ENCODE measurements at regions of chr19 and their contacts with region 1.

Region 1: DNA sequence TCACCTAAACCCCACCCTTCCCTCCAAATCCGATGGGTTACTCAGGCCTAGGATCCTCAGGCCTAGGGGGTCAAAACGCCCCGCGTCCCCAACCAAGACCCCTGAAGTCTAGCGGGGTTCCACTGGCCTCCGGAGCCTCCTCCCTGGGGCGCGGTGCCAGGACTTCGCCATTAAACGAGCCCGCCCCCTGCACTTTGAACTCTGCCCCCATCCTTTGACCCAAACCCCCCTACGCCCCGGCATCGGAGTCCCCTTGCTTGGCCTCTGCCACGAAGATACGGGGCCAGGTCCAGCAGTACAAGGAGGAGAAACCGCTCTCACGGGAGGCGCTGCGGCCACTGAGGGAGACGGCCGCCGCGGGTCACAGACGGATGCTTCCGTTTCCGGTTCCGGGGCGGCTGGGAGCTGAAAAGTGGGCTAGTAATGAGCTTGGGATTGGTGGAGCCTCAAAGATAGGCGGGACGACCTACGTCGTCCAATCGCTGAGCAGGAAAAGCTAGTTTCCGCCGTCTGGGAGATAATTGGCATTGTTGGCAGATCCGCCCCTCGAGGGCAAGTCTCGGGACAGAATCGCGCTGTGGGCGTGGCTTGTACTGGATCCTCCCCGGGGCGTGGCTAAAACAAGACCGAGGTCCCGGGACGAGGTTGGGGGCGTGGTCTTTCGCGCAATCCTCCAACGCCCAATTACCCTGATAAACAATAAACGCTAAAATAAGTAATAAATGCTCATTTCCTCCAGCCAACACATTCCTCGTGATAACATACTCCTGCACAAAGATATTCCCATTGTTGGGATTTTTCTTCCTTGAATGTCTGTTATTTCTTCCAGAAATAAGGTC is 5.7 kb upstream of the ZNF77 start:
- DNase-seq: peak; percentile 100
- H3K4me3 Mint-ChIP-seq: peak overlapping the region; percentile 96
- H3K27ac Mint-ChIP-seq: peak overlapping the region; percentile 96
- H3K4me1 Mint-ChIP-seq: peaks cover 27% of the 10 kb centered on the region
- H3K27me3 Mint-ChIP-seq: no peaks in the 10 kb centered on the region

Region 2: DNA sequence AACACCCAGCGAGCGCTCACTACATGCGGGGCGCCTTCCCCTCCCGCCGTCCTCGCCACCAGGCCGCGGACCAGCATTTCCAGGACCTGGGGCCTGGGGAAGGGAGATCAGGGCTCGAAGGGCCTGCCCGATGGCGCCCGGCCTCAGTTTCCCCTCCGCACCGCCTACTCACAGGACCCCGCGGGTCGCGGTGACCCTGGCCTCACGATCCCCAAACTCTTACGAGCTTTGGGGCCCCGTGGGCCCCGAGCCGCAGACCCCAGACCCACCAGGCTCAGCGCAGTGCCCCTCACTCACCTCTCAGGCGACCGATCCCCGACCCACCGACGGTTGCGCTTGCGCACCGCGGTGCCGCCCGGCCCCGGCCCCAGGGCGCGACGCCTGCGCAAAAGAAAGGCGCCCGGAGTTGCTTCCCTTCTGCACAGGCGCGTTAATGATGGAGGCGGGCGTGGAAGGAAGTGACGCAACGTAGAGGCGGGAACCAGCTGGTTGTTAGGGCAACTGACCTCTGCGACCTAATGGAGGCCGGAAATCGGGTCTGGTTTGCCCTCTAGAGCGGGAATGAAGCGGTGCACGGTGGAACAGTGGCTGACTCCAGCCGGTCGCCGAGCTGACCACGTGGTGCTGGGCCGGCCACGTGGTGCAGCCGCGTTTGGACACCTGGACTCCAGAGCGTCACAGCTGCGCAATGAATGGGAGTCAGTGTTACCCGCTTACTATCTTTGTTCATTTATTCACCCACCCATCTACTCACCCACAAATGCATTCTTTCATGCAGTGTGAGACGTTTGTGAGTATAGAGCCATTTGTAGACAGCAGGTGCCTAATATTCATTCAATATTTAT is 167.3 kb before region 1 on chr19 and contains the start of gene SGTA:
- CTCF ChIA-PET with region 1: interaction called, 3 read pairs
- intact Hi-C with region 1: loop called (anchors 1 kb)
- DNase-seq: peak; percentile 99
- H3K4me3 Mint-ChIP-seq: peak within 1 kb of the TSS; percentile 94
- H3K27ac Mint-ChIP-seq: peak within 1 kb of the TSS; percentile 91
- H3K4me1 Mint-ChIP-seq: peaks cover 65% of the 10 kb centered on the region
- H3K27me3 Mint-ChIP-seq: no peaks in the 10 kb centered on the region
- total RNA-seq, gene SGTA: 44.3 to 44.6 TPM

Region 3: GRCh38 chr19:2900296-2901252 is 49.9 kb before region 1 on chr19 and contains the start of gene ZNF57:
- CTCF ChIA-PET with region 1: interaction called, 3 read pairs
- intact Hi-C with region 1: loop called (anchors 1 kb)
- DNase-seq: peak; percentile 99
- H3K4me3 Mint-ChIP-seq: peak within 1 kb of the TSS; percentile 100
- H3K27ac Mint-ChIP-seq: peak within 1 kb of the TSS; percentile 82
- H3K4me1 Mint-ChIP-seq: peaks cover 15% of the 10 kb centered on the region
- H3K27me3 Mint-ChIP-seq: no peaks in the 10 kb centered on the region
- total RNA-seq, gene ZNF57: 3.9 to 4.7 TPM

Region 4: GRCh38 chr19:2977001-2977685 is 26.6 kb after region 1 on chr19 and contains the start of gene TLE6:
- CTCF ChIA-PET with region 1: interaction called, 3 read pairs
- intact Hi-C with region 1: loop called (anchors 1 kb)
- DNase-seq: peak; percentile 96
- H3K4me3 Mint-ChIP-seq: peak within 1 kb of the TSS; percentile 92
- H3K27ac Mint-ChIP-seq: peak within 1 kb of the TSS; percentile 18
- H3K4me1 Mint-ChIP-seq: peaks cover 15% of the 10 kb centered on the region
- H3K27me3 Mint-ChIP-seq: peaks cover 8% of the 10 kb centered on the region
- total RNA-seq, gene TLE6: 0.52 to 1.6 TPM

Region 5: DNA sequence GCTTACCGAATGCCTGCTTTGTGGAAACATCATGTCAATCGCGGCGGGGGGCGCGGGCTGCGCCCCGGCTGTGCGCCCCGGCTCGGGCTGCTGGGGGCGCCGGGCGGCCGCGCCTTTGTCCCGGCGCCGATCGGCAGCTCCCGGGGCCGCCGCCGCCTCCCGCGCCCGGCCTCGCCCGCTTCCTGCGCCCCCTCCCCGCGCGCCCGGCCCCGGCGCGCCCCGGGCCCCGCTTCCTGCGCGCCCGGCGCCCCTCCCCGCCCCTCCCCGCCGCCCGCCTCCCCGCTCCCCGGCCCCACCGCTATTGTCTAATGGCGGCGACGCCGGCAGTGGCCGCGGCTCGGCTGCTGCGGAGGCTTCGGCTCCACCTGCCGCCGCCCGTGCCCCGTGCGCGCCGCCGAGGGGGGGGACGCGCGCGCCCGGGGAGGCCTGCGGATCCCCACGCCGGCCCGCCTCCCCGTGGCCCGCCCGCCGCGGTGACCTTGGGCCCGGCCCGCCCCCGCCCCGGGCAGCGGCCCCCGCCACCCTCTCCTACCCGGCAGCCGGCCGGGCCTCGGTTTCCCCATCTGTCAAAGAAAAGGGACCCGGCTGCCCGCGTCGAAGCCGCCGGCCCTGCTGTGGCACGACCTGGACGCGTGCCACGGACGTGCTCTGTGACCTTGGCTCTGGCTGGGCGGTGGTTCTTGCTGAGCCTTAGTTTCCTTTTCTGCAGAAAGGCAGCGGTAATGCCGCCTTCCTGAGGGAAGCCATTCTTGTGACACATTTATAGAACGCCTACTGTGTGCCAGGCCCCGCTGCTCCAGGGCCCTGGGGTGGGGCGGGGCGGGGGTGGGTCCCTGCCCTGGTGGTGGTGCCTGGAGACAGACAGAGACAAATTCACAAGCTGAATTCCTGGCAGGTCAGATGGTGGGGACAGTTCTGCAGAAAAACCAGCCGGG is 111.9 kb after region 1 on chr19 and contains the start of gene TLE5:
- CTCF ChIA-PET with region 1: no interaction called
- intact Hi-C with region 1: loop called (anchors 5 kb)
- DNase-seq: peak; percentile 65
- H3K4me3 Mint-ChIP-seq: peak within 1 kb of the TSS; percentile 84
- H3K27ac Mint-ChIP-seq: peak within 1 kb of the TSS; percentile 91
- H3K4me1 Mint-ChIP-seq: peaks cover 33% of the 10 kb centered on the region
- H3K27me3 Mint-ChIP-seq: no peaks in the 10 kb centered on the region
- total RNA-seq, gene TLE5: 326 to 354 TPM

Region 6: GRCh38 chr19:3176603-3177501 is 226.3 kb after region 1 on chr19:
- CTCF ChIA-PET with region 1: no interaction called
- intact Hi-C with region 1: loop called (anchors 1 kb)
- DNase-seq: peak; percentile 84
- H3K4me3 Mint-ChIP-seq: peak overlapping the region; percentile 68
- H3K27ac Mint-ChIP-seq: peak overlapping the region; percentile 84
- H3K4me1 Mint-ChIP-seq: peaks cover 20% of the 10 kb centered on the region
- H3K27me3 Mint-ChIP-seq: no peaks in the 10 kb centered on the region